ENCODE measurements at regions of chr20 and their contacts with region 1.

Region 1: GRCh38 chr20:53915446-53916172 is 154.8 kb downstream of the BCAS1 start:
- DNase-seq: peak; percentile 100
- H3K4me3 Mint-ChIP-seq: peak overlapping the region; percentile 93
- H3K27ac Mint-ChIP-seq: peak overlapping the region; percentile 84
- H3K4me1 Mint-ChIP-seq: peaks cover 47% of the 10 kb centered on the region
- H3K27me3 Mint-ChIP-seq: no peaks in the 10 kb centered on the region

Region 2: GRCh38 chr20:53578492-53579222 is 337.0 kb before region 1 on chr20:
- CTCF ChIA-PET with region 1: interaction called, 14 read pairs
- intact Hi-C with region 1: loop called (anchors 1 kb)
- DNase-seq: peak; percentile 77
- H3K4me3 Mint-ChIP-seq: peak overlapping the region; percentile 71
- H3K27ac Mint-ChIP-seq: peak overlapping the region; percentile 92
- H3K4me1 Mint-ChIP-seq: peaks cover 90% of the 10 kb centered on the region
- H3K27me3 Mint-ChIP-seq: no peaks in the 10 kb centered on the region

Region 3: DNA sequence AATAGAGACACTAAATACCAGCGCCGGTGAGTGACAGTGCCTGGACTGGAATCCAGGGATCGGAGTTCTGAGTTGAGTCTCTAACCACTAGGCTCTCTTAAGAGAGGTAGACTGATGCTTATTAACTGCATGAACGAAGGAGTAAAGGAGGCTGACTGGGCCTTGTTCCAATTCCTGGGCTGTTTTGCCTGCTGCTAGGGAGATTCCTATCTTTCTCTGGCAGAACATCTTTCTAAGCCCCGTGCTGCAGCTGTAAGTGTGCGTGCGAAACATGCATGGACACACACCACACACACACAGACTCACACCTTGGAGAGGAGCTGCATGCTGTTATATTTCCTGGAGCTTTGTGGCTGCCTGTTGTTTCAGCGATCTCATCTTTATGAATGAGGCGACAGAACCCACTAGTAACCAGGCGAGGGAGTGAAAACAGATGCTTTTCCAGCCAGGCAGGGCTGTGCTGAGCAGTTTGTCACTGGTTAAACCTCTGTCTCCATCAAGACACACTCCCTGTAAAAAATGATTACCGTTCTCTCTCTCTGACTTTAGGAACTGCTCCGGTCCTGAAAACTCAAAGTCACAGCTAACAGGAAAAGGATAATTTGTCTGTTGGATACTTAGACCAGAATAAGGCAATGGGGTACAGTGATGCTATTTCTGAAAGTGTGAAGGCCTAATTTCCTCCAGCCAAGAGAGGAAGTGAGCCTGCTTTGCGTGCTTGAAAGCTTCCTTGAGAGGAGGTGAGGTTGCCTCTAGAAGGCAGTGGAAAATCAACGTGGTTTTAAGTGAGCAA is 164.6 kb before region 1 on chr20:
- CTCF ChIA-PET with region 1: no interaction called
- intact Hi-C with region 1: loop called (anchors 5 kb)
- DNase-seq: peak; percentile 66
- H3K4me3 Mint-ChIP-seq: peak overlapping the region; percentile 32
- H3K27ac Mint-ChIP-seq: peak overlapping the region; percentile 91
- H3K4me1 Mint-ChIP-seq: peaks cover 71% of the 10 kb centered on the region
- H3K27me3 Mint-ChIP-seq: no peaks in the 10 kb centered on the region

Region 4: DNA sequence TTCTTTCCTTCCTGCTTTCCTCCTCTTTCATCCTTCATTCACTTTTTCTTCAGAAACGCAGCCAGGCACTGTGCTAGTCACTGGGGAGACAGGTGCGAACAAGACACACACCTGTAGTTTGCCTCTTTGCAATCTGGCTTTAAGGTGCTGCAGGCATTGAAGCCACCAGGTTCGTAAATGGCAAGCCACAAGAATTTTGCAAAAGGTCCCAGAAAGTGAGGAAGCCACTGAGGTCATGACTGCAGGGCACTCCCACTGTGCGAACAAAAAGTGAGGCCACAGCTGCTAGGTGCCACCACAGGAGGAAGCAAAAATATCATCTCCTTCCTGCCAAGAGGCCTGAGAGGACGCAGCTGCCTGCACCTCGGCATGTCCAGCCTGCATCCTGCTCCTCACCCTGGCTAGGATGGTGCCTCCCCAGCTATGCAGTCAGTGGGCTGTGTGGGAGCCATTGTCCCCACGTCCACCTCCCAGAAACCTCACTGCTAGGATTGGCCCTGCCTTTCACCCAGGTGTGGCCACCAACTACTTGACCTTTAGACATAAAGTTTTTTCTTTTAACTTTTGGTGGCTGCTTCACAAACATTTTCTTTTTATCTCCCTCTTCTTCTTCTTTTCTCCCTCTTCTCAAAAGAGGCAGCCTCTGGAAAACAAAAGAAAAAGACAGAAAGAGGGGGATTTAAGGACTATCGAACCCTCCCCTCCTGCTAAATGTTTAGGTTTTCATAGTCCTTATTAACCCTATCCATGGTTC is 76.0 kb before region 1 on chr20:
- CTCF ChIA-PET with region 1: interaction called, 13 read pairs
- intact Hi-C with region 1: loop called (anchors 1 kb)
- DNase-seq: peak; percentile 65
- H3K4me3 Mint-ChIP-seq: peak overlapping the region; percentile 51
- H3K27ac Mint-ChIP-seq: peak overlapping the region; percentile 78
- H3K4me1 Mint-ChIP-seq: peaks cover 73% of the 10 kb centered on the region
- H3K27me3 Mint-ChIP-seq: no peaks in the 10 kb centered on the region

Region 5: GRCh38 chr20:53891306-53891944 is 24.2 kb before region 1 on chr20:
- CTCF ChIA-PET with region 1: interaction called, 10 read pairs
- intact Hi-C with region 1: loop called (anchors 2 kb)
- DNase-seq: no peak
- H3K4me3 Mint-ChIP-seq: no peak overlapping the region
- H3K27ac Mint-ChIP-seq: no peak overlapping the region
- H3K4me1 Mint-ChIP-seq: peaks cover 48% of the 10 kb centered on the region
- H3K27me3 Mint-ChIP-seq: no peaks in the 10 kb centered on the region

Region 6: GRCh38 chr20:53934421-53935343 is 19.1 kb after region 1 on chr20:
- CTCF ChIA-PET with region 1: interaction called, 37 read pairs
- intact Hi-C with region 1: loop called (anchors 1 kb)
- DNase-seq: peak; percentile 42
- H3K4me3 Mint-ChIP-seq: no peak overlapping the region
- H3K27ac Mint-ChIP-seq: peak overlapping the region; percentile 42
- H3K4me1 Mint-ChIP-seq: peaks cover 43% of the 10 kb centered on the region
- H3K27me3 Mint-ChIP-seq: no peaks in the 10 kb centered on the region